Psoas muscle (tissue), 8 donors: ENCODE measurements at regions of chr5 and their contacts with region 1.

Region 1: DNA sequence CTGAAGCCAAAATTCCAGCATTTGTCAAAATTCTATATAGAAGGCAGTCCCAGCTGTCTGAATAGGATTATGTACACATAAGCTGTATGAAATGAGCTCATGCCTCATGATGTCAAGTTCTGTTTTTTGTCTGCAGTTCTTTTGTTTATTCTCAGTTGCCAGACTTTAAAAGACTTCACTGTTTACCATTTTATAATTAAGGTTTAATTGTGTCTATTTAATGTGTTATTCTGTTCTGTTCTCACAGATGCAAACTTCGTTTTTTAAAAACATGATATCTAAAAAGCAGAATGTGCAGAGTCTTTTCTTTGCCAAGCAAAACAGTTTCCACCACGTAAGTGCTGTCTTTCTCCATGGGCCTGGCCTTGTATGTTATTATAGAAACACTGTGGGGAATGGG is 31.1 kb downstream of the ERAP1 start:
- DNase-seq: no peak
- ATAC-seq: no peak
- H3K4me3 ChIP-seq: no peak overlapping the region
- H3K27ac ChIP-seq: no peak overlapping the region
- H3K4me1 ChIP-seq: peaks cover 6% of the 10 kb centered on the region
- H3K27me3 ChIP-seq: no peaks in the 10 kb centered on the region
- CTCF ChIP-seq: no peak

Region 2: DNA sequence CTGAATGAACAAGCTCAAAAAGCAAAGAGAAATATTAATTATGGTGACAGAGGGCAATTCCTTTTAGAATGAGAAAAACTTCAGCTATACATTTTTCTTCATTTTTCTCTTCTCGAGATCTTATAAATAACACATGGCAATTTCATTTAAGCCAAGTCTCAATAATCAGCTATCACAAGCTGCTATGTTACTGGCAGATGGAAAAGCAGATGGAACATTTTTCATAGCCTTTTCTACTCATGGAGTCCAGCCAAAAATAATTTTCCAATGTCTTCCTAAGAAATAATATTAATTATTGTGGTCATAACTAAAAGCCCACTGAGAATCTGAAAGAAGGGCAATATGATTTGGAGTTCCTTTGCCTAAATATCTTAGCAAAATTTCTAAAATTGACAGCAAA is 1257.5 kb before region 1 on chr5:
- intact Hi-C with region 1: loop called in 1 of 2 experiments (anchors 10 kb)
- DNase-seq: no peak
- ATAC-seq: no peak
- H3K4me3 ChIP-seq: no peak overlapping the region
- H3K27ac ChIP-seq: no peak overlapping the region
- H3K4me1 ChIP-seq: no peaks in the 10 kb centered on the region
- H3K27me3 ChIP-seq: no peaks in the 10 kb centered on the region
- CTCF ChIP-seq: no peak

Region 3: GRCh38 chr5:96743065-96743768 is 33.4 kb before region 1 on chr5:
- intact Hi-C with region 1: no loop called
- DNase-seq: peak in 1 of 2 donors; percentile 63
- ATAC-seq: peak; percentile 36 to 64 (median 62)
- H3K4me3 ChIP-seq: no peak overlapping the region
- H3K27ac ChIP-seq: peak overlapping the region; percentile 43
- H3K4me1 ChIP-seq: peaks cover 4% of the 10 kb centered on the region
- H3K27me3 ChIP-seq: no peaks in the 10 kb centered on the region
- CTCF ChIP-seq: no peak

Region 4: GRCh38 chr5:97167435-97167834 is 390.8 kb after region 1 on chr5:
- intact Hi-C with region 1: loop called in 1 of 2 experiments (anchors 10 kb)
- DNase-seq: no peak
- ATAC-seq: no peak
- H3K4me3 ChIP-seq: no peak overlapping the region
- H3K27ac ChIP-seq: no peak overlapping the region
- H3K4me1 ChIP-seq: no peaks in the 10 kb centered on the region
- H3K27me3 ChIP-seq: no peaks in the 10 kb centered on the region
- CTCF ChIP-seq: no peak